Caco-2 (cell line): ENCODE measurements at regions of chr19 and their contacts with region 1.

Region 1: DNA sequence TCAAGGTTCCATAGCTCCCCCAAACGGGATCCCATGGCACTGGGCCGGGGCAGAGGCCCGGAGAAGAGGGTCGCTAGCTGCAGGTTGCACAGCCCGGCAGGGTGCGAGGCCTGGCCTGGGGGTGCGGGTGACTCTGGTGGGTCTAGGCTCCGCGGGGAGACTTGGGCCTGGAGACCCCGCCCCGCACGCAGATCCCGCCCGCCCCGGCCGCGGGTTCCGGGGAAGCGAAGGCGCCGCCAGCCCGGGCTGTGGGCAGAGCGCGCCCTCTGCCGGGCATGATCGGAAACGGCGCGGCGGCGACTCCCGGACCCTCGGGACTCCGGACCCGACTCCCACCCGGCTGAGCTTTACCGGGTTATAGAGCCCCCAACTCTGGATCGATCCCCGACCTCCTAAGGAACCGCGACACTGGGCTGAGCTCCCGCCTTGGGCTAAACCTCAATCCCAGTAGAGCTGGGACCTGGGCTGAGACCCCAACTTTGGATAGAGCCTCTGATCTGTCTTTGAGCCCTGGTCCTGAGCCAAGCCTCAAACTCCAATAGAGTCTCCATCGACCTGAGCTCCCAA is 3.1 kb upstream of the TNFAIP8L1 start:
- DNase-seq: peak; percentile 53 to 81
- H3K4me3 ChIP-seq: peak overlapping the region; percentile 42
- H3K4me3 Mint-ChIP-seq: peak overlapping the region; percentile 43
- H3K27ac Mint-ChIP-seq: no peak overlapping the region
- H3K4me1 ChIP-seq: peaks cover 12% of the 10 kb centered on the region; the same call in 1 of the 2 replicates
- H3K4me1 Mint-ChIP-seq: peaks cover 12% of the 10 kb centered on the region
- H3K27me3 ChIP-seq: no peaks in the 10 kb centered on the region
- H3K27me3 Mint-ChIP-seq: no peaks in the 10 kb centered on the region
- CTCF ChIP-seq: peak; percentile 77 to 89

Region 2: DNA sequence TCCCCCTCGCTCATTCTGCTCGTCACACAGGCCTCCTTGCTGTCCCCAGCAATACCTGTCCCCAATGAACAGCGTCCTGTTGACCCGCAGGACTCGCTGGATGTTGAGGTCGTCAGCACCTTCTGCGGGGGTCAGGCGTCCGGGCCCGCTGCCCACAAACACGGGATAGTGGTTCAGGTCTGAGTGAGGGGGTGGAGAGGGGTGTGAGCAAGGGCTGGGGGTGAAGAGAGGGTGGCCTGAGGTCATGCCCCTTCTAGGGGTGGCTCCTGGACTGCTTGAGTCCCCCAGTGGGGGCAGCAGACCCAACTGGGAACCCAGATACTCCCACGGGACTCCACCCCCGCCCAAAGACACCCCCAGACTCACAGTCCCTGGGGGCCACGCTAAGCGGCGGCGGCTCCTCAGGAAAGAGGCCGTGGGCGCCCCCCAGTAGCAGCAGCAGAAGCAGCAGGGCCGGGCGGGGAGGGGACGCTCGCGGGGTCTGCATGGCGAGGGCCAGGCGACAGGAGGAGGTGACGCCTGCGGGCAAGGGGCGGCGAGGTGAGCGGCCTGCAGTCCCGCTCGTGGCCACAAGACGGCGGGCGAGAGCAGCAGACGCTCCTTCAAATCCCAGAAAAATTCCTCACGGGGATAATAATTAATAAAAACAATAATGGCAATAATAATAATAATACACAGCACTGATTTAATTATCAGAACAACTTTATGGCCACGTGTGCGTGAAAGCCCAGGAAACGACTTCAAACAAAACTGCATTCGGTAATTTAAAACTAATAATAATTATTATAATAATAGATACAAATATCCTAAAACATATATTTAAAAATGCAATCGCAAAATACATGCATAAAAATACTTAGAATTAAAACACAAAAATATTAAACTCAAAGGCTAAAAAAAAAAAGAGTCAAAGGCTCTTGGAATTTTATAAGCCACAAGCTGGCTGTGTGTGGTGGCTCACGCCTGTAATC is 78.0 kb before region 1 on chr19:
- CTCF ChIA-PET with region 1: no interaction called
- POLR2A ChIA-PET with region 1: no interaction called
- intact Hi-C with region 1: loop called (anchors 2 kb)
- DNase-seq: peak; percentile 56 to 70
- H3K4me3 ChIP-seq: no peak overlapping the region
- H3K4me3 Mint-ChIP-seq: peak overlapping the region; percentile 62
- H3K27ac Mint-ChIP-seq: no peak overlapping the region
- H3K4me1 ChIP-seq: peaks cover 11% of the 10 kb centered on the region; the same call in 1 of the 2 replicates
- H3K4me1 Mint-ChIP-seq: peaks cover 7% of the 10 kb centered on the region
- H3K27me3 ChIP-seq: no peaks in the 10 kb centered on the region
- H3K27me3 Mint-ChIP-seq: peaks cover 4% of the 10 kb centered on the region
- CTCF ChIP-seq: peak; percentile 92 to 96

Region 3: GRCh38 chr19:4589579-4590410 is 46.4 kb before region 1 on chr19:
- CTCF ChIA-PET with region 1: interaction called, 22 read pairs
- POLR2A ChIA-PET with region 1: no interaction called
- intact Hi-C with region 1: loop called (anchors 1 kb)
- DNase-seq: peak; percentile 64 to 66
- H3K4me3 ChIP-seq: no peak overlapping the region
- H3K4me3 Mint-ChIP-seq: no peak overlapping the region
- H3K27ac Mint-ChIP-seq: no peak overlapping the region
- H3K4me1 ChIP-seq: no peaks in the 10 kb centered on the region
- H3K4me1 Mint-ChIP-seq: no peaks in the 10 kb centered on the region
- H3K27me3 ChIP-seq: no peaks in the 10 kb centered on the region
- H3K27me3 Mint-ChIP-seq: peaks cover 7% of the 10 kb centered on the region
- CTCF ChIP-seq: peak; percentile 60 to 70

Region 4: GRCh38 chr19:4647676-4648644 is 11.7 kb after region 1 on chr19:
- CTCF ChIA-PET with region 1: no interaction called
- POLR2A ChIA-PET with region 1: no interaction called
- intact Hi-C with region 1: no loop called
- DNase-seq: no peak
- H3K4me3 ChIP-seq: no peak overlapping the region
- H3K4me3 Mint-ChIP-seq: no peak overlapping the region
- H3K27ac Mint-ChIP-seq: no peak overlapping the region
- H3K4me1 ChIP-seq: no peaks in the 10 kb centered on the region
- H3K4me1 Mint-ChIP-seq: no peaks in the 10 kb centered on the region
- H3K27me3 ChIP-seq: no peaks in the 10 kb centered on the region
- H3K27me3 Mint-ChIP-seq: no peaks in the 10 kb centered on the region
- CTCF ChIP-seq: no peak